Calu3 (cell line): ENCODE measurements at regions of chr3 and their contacts with region 1.

Region 1: DNA sequence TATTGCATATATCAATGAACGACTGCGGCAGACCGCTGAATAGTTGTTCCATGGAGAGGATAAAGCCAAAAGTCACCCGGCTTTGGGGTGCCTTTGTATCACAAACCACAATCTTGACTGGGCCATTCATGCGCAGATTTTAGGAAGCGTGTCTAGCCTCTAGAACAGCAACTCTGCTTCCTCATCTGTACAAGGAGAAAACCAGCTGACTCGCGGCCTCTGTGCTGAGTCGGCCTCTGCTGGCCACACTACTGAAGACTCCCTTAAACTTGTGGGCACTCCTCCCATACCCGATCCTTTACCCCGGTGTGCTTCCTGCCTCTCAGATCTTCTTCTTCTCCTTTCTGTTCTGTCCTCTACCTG is 872 bp downstream of the DLEC1 start:
- DNase-seq: peak; percentile 58
- H3K4me3 Mint-ChIP-seq: peak overlapping the region; percentile 80
- H3K27ac Mint-ChIP-seq: peak overlapping the region; percentile 15
- H3K4me1 Mint-ChIP-seq: peaks cover 17% of the 10 kb centered on the region
- H3K27me3 Mint-ChIP-seq: no peaks in the 10 kb centered on the region
- CTCF ChIP-seq: no peak

Region 2: DNA sequence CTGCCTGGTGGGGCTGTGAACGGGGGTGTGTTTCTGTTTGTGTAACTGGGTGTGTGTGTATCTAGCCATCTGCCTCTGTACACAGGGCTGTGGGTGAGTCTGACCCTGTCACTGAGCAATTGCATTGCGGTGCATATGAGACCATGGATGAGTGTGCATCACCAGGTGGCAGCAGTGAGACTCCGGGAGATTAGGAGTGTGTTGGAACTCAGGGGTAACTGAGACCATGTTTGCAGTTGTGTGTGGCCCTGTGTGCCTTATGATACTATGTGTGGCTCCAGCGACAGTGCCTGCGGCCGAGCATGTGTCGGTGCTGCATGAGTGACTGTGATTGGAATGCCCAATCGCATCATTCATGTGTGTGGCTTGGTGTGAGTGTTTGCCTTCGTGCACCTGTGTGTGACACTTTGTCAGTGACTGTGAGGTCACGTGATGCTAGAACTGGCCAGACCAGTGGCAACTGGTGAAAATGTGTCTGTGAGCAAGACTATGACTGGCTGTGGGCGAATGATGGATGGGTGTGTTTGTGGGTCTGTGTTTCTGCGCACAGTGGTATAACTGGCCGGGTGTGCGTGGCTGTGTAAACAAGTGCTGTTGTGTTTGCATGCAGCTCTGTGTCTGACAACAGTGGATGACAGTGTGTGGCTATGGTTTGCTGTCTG is 35.3 kb before region 1 on chr3:
- CTCF ChIA-PET with region 1: no interaction called
- intact Hi-C with region 1: loop called (anchors 5 kb)
- DNase-seq: peak; percentile 84
- H3K4me3 Mint-ChIP-seq: peak overlapping the region; percentile 54
- H3K27ac Mint-ChIP-seq: peak overlapping the region; percentile 75
- H3K4me1 Mint-ChIP-seq: peaks cover 30% of the 10 kb centered on the region
- H3K27me3 Mint-ChIP-seq: no peaks in the 10 kb centered on the region
- CTCF ChIP-seq: peak; percentile 78